ENCODE measurements at regions of chr19 and their contacts with region 1.

Region 1: GRCh38 chr19:12847159-12848139 is 9.1 kb downstream of the MAST1 start:
- DNase-seq: peak; percentile 86
- ATAC-seq: peak; percentile 98
- H3K4me3 Mint-ChIP-seq: peak overlapping the region; percentile 34
- H3K27ac Mint-ChIP-seq: no peak overlapping the region
- H3K4me1 Mint-ChIP-seq: peaks cover 8% of the 10 kb centered on the region
- H3K27me3 Mint-ChIP-seq: peaks cover 19% of the 10 kb centered on the region

Region 2: GRCh38 chr19:12736995-12737834 is 110.2 kb before region 1 on chr19 and contains the start of gene GET3:
- CTCF ChIA-PET with region 1: interaction called, 12 read pairs
- POLR2A ChIA-PET with region 1: no interaction called
- DNase-seq: peak; percentile 89
- ATAC-seq: peak; percentile 85
- H3K4me3 Mint-ChIP-seq: peak within 1 kb of the TSS; percentile 100
- H3K27ac Mint-ChIP-seq: peak within 1 kb of the TSS; percentile 98
- H3K4me1 Mint-ChIP-seq: peaks cover 43% of the 10 kb centered on the region
- H3K27me3 Mint-ChIP-seq: no peaks in the 10 kb centered on the region
- total RNA-seq, gene GET3: 66.8 to 71.5 TPM

Region 3: GRCh38 chr19:12766051-12766521 is 81.4 kb before region 1 on chr19:
- CTCF ChIA-PET with region 1: interaction called, 75 read pairs
- POLR2A ChIA-PET with region 1: no interaction called
- DNase-seq: peak; percentile 78
- ATAC-seq: peak; percentile 83
- H3K4me3 Mint-ChIP-seq: no peak overlapping the region
- H3K27ac Mint-ChIP-seq: no peak overlapping the region
- H3K4me1 Mint-ChIP-seq: peaks cover 12% of the 10 kb centered on the region
- H3K27me3 Mint-ChIP-seq: no peaks in the 10 kb centered on the region

Region 4: DNA sequence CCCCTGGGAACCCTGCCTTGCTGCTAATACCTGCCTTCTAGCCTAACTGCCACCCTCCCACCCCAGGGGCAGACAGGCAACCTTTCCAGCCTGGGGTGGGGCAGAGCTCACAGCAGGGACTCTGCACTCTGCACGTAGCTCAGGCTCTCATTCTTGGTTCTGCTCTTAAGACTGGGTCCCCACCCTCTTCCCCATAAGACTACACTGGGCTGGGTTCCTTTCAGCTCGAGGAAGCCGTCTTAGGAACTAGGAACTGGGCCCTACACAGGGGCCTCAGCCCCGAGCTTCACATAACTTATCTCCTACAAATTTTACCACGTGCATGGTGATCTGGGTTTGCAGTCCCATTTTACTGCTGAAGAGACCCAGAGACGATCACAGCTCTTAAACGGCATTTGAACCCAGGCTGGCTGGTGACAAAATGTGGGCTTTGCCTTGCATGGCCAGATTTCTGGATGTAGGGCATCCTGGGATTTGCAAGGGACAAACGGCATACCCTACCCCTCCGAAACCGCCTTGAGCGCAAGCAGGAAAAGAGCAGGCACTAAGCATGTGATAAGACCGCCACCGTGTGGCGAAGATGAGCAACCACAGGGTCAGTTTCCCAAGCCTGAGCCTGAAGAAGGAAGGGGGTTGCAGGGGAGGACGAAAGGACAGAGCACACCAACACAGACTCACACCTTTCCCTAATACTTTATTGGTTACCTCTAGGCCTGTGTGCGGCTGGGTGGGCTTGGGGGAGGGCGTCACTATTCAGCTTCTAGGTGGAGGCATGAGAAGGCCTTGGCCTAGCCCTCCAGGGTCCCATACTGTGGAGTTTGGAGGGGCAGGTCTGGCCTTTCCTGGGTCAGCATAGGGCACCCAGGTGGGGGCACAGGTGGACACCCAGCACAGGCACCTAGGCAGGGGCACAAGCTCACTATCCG is 51.0 kb before region 1 on chr19:
- CTCF ChIA-PET with region 1: interaction called, 25 read pairs
- POLR2A ChIA-PET with region 1: no interaction called
- DNase-seq: peak; percentile 84
- ATAC-seq: no peak
- H3K4me3 Mint-ChIP-seq: peak overlapping the region; percentile 63
- H3K27ac Mint-ChIP-seq: peak overlapping the region; percentile 82
- H3K4me1 Mint-ChIP-seq: peaks cover 39% of the 10 kb centered on the region
- H3K27me3 Mint-ChIP-seq: no peaks in the 10 kb centered on the region

Region 5: DNA sequence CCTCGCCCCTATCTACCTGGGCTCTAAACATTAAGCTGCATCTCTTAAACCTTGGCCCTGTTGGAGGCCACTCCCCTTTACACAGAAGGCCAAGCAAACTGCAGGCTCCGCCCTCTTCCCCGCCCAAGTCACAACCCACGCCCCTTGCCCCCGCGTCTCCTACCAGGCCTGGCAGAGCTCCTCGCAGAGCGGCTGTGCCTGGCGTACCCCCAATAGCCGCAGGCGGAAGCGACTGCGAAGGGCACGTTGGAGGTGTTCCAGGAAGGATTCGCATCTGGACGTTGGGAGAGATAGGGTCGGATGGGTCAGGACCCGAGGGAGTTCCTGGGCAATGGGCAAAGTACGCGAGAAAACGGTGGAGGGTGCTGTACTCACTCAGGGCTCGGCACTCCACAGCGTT is 19.0 kb before region 1 on chr19:
- CTCF ChIA-PET with region 1: interaction called, 10 read pairs
- POLR2A ChIA-PET with region 1: no interaction called
- DNase-seq: peak; percentile 61
- ATAC-seq: peak; percentile 64
- H3K4me3 Mint-ChIP-seq: no peak overlapping the region
- H3K27ac Mint-ChIP-seq: no peak overlapping the region
- H3K4me1 Mint-ChIP-seq: peaks cover 17% of the 10 kb centered on the region
- H3K27me3 Mint-ChIP-seq: peaks cover 49% of the 10 kb centered on the region

Region 6: GRCh38 chr19:12890787-12891552 is 43.5 kb after region 1 on chr19 and contains the start of gene GCDH:
- CTCF ChIA-PET with region 1: interaction called, 11 read pairs
- POLR2A ChIA-PET with region 1: no interaction called
- DNase-seq: peak; percentile 99
- ATAC-seq: peak; percentile 96
- H3K4me3 Mint-ChIP-seq: peak within 1 kb of the TSS; percentile 95
- H3K27ac Mint-ChIP-seq: peak within 1 kb of the TSS; percentile 91
- H3K4me1 Mint-ChIP-seq: peaks cover 35% of the 10 kb centered on the region
- H3K27me3 Mint-ChIP-seq: peaks cover 3% of the 10 kb centered on the region
- total RNA-seq, gene GCDH: 39.5 to 42.5 TPM

Region 7: GRCh38 chr19:12974301-12975220 is 127.1 kb after region 1 on chr19:
- CTCF ChIA-PET with region 1: no interaction called
- POLR2A ChIA-PET with region 1: no interaction called
- DNase-seq: no peak
- ATAC-seq: no peak
- H3K4me3 Mint-ChIP-seq: no peak overlapping the region
- H3K27ac Mint-ChIP-seq: no peak overlapping the region
- H3K4me1 Mint-ChIP-seq: no peaks in the 10 kb centered on the region
- H3K27me3 Mint-ChIP-seq: peaks cover 8% of the 10 kb centered on the region

Region 8: GRCh38 chr19:12985049-12985776 is 137.8 kb after region 1 on chr19:
- CTCF ChIA-PET with region 1: no interaction called
- POLR2A ChIA-PET with region 1: no interaction called
- DNase-seq: no peak
- ATAC-seq: no peak
- H3K4me3 Mint-ChIP-seq: no peak overlapping the region
- H3K27ac Mint-ChIP-seq: no peak overlapping the region
- H3K4me1 Mint-ChIP-seq: no peaks in the 10 kb centered on the region
- H3K27me3 Mint-ChIP-seq: peaks cover 2% of the 10 kb centered on the region

Measured in activated CD8-positive, alpha-beta T cell treated with anti-CD3 and anti-CD28 coated beads, Interleukin-2, amount 10 ng/mL, durations not matched to agents 7 days and 5 days (primary cell).